Activated CD4-positive, alpha-beta T cell treated with anti-CD3 and anti-CD28 coated beads, Interleukin-2, amount 10 ng/mL, durations not matched to agents 24 days and 14 days (primary cell): ENCODE measurements at regions of chr4 and their contacts with region 1.

Region 1: GRCh38 chr4:44448548-44449461 is at the start of gene KCTD8:
- DNase-seq: peak; percentile 89
- H3K4me3 Mint-ChIP-seq: peak within 1 kb of the TSS; percentile 81
- H3K27ac Mint-ChIP-seq: peak within 1 kb of the TSS; percentile 41
- H3K4me1 Mint-ChIP-seq: peaks cover 9% of the 10 kb centered on the region
- H3K27me3 Mint-ChIP-seq: peaks cover 49% of the 10 kb centered on the region
- total RNA-seq, gene KCTD8: not detected in 2 replicates

Region 2: DNA sequence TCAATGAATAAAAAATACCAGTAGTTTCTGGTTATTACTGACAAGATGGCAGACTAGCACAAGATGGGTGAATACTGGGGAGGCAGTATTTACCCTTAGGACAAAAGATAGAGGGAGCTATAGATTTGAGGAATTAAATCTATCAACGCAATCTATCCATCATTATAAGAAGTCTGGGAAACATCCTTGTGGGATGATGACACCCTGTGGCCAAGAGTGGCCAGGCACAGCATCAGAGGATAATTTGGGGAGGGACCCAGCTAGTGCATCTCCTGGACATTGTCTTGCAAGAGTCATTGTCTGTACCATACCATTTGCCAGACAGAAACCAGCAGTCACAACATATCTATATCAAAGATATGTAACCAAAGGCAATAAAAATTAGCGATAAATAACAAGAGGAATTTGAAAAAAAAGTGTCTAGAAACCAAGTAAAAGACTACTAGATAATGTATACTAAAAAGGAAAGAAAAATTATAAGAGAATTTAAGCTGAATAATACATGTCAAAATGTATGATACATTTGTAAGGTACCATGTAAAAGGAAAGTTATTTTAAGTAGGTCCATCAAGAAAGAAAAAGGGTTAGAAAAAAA is 23.1 kb before region 1 on chr4:
- intact Hi-C with region 1: no loop called
- DNase-seq: no peak
- H3K4me3 Mint-ChIP-seq: no peak overlapping the region
- H3K27ac Mint-ChIP-seq: no peak overlapping the region
- H3K4me1 Mint-ChIP-seq: no peaks in the 10 kb centered on the region
- H3K27me3 Mint-ChIP-seq: no peaks in the 10 kb centered on the region

Region 3: DNA sequence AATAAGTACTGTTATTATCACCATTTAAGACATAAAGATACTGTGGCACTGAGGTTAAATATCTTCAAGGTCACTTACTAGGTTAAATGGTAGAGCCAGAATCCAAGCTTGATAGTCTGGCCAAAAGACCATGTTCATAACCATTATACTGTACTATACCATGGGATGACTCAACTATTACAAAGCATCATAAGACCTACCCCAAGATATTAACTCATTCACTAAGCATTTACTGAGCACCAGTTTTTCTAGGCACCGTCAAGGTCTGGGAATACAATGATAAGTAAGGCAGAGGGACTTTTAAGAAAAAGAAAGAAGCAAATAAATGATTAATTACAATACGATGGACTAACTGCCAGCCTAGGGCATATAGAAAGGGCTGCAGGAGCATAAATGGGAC is 95.4 kb after region 1 on chr4:
- intact Hi-C with region 1: no loop called
- DNase-seq: no peak
- H3K4me3 Mint-ChIP-seq: no peak overlapping the region
- H3K27ac Mint-ChIP-seq: no peak overlapping the region
- H3K4me1 Mint-ChIP-seq: no peaks in the 10 kb centered on the region
- H3K27me3 Mint-ChIP-seq: no peaks in the 10 kb centered on the region

Region 4: DNA sequence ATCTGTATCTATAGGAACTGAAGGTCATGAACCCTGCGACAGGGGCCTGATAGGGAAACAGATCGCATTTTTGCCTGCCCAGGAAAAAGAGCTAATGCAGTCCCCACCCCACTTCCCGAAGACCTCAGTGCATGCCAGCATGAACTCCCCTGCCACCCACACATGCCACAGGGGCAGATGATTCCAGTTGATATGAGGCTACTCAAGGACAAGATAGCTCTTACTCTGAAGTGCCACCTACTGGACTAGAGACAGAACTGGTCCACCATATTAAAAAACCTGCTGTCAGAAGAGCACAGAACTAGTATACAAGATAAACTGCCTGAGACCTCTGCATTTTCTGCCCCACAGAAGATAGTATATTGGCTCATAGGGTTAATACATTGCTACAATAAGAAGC is 134.6 kb after region 1 on chr4:
- intact Hi-C with region 1: no loop called
- DNase-seq: no peak
- H3K4me3 Mint-ChIP-seq: no peak overlapping the region
- H3K27ac Mint-ChIP-seq: no peak overlapping the region
- H3K4me1 Mint-ChIP-seq: no peaks in the 10 kb centered on the region
- H3K27me3 Mint-ChIP-seq: no peaks in the 10 kb centered on the region

Region 5: GRCh38 chr4:44629280-44629866 is 180.6 kb after region 1 on chr4:
- intact Hi-C with region 1: loop called (anchors 5 kb)
- DNase-seq: peak; percentile 79
- H3K4me3 Mint-ChIP-seq: no peak overlapping the region
- H3K27ac Mint-ChIP-seq: no peak overlapping the region
- H3K4me1 Mint-ChIP-seq: no peaks in the 10 kb centered on the region
- H3K27me3 Mint-ChIP-seq: no peaks in the 10 kb centered on the region

Region 6: DNA sequence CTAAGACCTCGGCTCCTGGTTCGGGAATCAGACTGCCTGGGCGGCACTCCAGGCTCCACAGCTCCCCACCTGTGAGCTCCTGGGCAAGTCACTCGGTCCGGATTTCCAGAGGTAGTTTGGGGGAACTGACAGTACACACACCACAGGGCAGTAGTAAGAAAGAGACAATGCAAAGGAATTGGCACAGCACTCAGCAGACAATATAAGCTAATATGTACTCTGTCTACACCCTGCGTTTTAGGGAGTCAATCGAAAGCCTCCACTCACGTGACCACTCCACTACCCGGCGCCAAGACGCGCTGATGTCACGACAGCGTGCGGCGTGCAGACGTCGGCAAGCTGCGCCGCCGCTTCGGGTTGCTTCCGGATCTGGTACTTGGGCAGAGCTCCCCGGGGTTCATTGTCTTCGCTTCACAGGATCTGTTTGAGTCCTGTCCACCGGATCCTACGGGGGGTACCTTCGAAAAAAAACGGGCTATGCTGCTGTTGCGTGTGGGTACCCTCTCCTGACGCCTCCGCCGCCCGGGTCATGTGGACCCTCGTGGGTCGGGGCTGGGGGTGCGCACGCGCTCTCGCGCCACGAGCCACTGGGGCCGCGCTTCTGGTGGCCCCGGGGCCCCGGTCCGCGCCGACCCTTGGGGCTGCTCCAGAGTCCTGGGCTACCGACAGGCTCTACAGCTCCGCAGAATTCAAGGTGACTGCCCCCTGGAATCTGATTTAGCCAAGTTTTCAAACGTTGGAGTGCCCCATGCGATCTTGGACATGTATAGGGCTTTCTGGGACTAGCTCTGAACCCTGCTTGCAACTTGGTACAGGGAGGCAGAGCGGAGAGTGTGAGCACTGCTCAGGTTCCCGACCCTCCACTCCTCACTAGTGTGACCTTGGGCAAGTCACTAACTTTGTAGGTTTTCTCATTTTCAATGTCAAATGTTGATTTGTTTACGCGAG is 229.6 kb after region 1 on chr4 and contains the start of gene GUF1:
- intact Hi-C with region 1: loop called (anchors 2 kb)
- DNase-seq: peak; percentile 97
- H3K4me3 Mint-ChIP-seq: peak within 1 kb of the TSS; percentile 98
- H3K27ac Mint-ChIP-seq: peak within 1 kb of the TSS; percentile 98
- H3K4me1 Mint-ChIP-seq: peaks cover 26% of the 10 kb centered on the region
- H3K27me3 Mint-ChIP-seq: peaks cover 9% of the 10 kb centered on the region
- total RNA-seq, gene GUF1: 38.4 and 39.9 TPM in 2 replicates

Region 7: GRCh38 chr4:44726262-44726871 is 277.6 kb after region 1 on chr4 and contains the start of gene GNPDA2:
- intact Hi-C with region 1: loop called (anchors 2 kb)
- DNase-seq: peak; percentile 94
- H3K4me3 Mint-ChIP-seq: peak within 1 kb of the TSS; percentile 85
- H3K27ac Mint-ChIP-seq: peak within 1 kb of the TSS; percentile 91
- H3K4me1 Mint-ChIP-seq: peaks cover 24% of the 10 kb centered on the region
- H3K27me3 Mint-ChIP-seq: peaks cover 6% of the 10 kb centered on the region
- total RNA-seq, gene GNPDA2: 18.8 and 18.9 TPM in 2 replicates